ENCODE measurements at regions of chr11 and their contacts with region 1.

Region 1: DNA sequence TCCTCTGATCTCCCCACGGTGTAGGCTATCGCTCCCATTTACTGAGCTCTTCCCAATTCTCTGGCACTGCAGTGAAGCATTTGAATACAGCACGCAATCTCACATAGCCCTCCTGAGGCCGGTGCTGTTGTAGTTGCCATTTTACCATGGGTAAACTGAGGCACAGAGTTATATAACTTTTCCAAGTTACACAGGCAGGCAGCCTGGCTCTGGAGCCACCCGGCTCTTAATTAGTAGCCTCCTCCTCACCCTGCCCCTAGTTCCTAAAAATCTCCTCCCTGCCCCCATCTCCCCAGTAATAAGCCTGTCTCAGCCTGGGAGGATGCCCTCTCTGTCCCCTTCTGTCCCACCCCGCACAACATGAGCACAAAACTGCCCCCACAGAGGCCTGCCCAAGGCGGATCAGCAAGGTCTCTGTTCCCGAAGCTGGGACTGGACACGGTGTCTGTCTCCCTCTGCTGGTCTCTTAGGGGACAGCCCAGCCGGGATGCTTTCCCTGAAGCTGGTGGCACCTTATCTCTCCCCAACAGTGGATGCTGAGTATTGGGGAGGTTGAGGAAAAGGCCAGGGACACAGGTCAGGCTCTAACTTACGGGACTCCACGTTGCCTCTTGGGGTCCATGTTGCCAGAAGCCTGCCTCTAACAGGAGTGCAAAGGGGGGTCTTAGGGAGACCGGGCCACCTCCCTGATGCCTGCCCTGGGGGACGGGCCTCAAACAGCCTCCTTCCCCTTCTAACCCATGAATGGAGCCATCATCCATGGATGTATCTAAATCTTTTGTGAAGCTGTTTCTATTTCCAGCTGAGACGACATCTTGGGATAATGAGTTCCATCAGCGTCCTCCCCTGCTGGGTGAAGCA is 9.1 kb upstream of the CLCF1 start:
- DNase-seq: peak; percentile 81
- ATAC-seq: peak; percentile 76 to 91 (median 88)
- H3K4me3 ChIP-seq: no peak overlapping the region
- H3K27ac ChIP-seq: no peak overlapping the region
- H3K4me1 ChIP-seq: peaks cover 0 to 44% (median 4%) of the 10 kb centered on the region in 9 donors
- H3K27me3 ChIP-seq: peaks cover 0 to 7% (median 0%) of the 10 kb centered on the region in 7 donors
- CTCF ChIP-seq: peak; percentile 92 to 99 (median 96)

Region 2: GRCh38 chr11:66950113-66950535 is 432.4 kb before region 1 on chr11:
- intact Hi-C with region 1: no loop called
- DNase-seq: no peak
- ATAC-seq: peak in 2 of 8 donors; percentile 16 to 80
- H3K4me3 ChIP-seq: no peak overlapping the region
- H3K27ac ChIP-seq: no peak overlapping the region
- H3K4me1 ChIP-seq: peaks cover 0 to 5% (median 0%) of the 10 kb centered on the region in 9 donors
- H3K27me3 ChIP-seq: no peaks in the 10 kb centered on the region
- CTCF ChIP-seq: no peak

Region 3: DNA sequence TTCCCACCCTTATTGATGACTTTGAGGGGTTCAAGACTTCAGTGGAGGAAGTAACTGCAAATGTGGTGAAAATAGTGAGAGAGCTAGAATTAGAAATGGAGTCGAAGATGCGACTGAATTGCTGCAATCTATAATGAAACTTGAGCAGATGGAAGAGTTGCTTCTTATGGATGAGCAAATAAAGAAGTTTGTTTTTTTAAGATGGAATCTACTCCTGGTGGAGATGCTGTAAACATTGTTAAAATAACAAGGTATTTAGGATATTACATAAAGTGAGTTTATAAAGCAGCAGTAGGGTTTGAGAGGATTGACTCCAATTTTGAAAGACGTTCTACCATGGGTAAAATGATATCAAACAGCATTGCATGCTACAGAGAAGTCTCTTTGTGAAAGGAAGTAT is 180.5 kb before region 1 on chr11:
- intact Hi-C with region 1: no loop called
- DNase-seq: no peak
- ATAC-seq: no peak
- H3K4me3 ChIP-seq: no peak overlapping the region
- H3K27ac ChIP-seq: no peak overlapping the region
- H3K4me1 ChIP-seq: no peaks in the 10 kb centered on the region
- H3K27me3 ChIP-seq: no peaks in the 10 kb centered on the region
- CTCF ChIP-seq: no peak

Region 4: GRCh38 chr11:67317205-67317887 is 65.2 kb before region 1 on chr11:
- intact Hi-C with region 1: loop called in 1 of 10 experiments (anchors 10 kb)
- DNase-seq: peak; percentile 96 to 97
- ATAC-seq: peak; percentile 93 to 97 (median 96)
- H3K4me3 ChIP-seq: peak overlapping the region; percentile 68 to 94 (median 78)
- H3K27ac ChIP-seq: peak overlapping the region; percentile 84 to 97 (median 94)
- H3K4me1 ChIP-seq: peaks cover 4 to 30% (median 19%) of the 10 kb centered on the region in 9 donors
- H3K27me3 ChIP-seq: no peaks in the 10 kb centered on the region
- CTCF ChIP-seq: peak; percentile 92 to 99 (median 97)

Region 5: GRCh38 chr11:67345920-67346799 is 36.3 kb before region 1 on chr11:
- intact Hi-C with region 1: loop called in 5 of 10 experiments (anchors 1 to 5 kb)
- DNase-seq: no peak
- ATAC-seq: no peak
- H3K4me3 ChIP-seq: no peak overlapping the region
- H3K27ac ChIP-seq: no peak overlapping the region
- H3K4me1 ChIP-seq: peaks cover 5 to 24% (median 10%) of the 10 kb centered on the region in 9 donors
- H3K27me3 ChIP-seq: no peaks in the 10 kb centered on the region
- CTCF ChIP-seq: peak in 7 of 9 donors; percentile 31 to 75 (median 39)

Region 6: DNA sequence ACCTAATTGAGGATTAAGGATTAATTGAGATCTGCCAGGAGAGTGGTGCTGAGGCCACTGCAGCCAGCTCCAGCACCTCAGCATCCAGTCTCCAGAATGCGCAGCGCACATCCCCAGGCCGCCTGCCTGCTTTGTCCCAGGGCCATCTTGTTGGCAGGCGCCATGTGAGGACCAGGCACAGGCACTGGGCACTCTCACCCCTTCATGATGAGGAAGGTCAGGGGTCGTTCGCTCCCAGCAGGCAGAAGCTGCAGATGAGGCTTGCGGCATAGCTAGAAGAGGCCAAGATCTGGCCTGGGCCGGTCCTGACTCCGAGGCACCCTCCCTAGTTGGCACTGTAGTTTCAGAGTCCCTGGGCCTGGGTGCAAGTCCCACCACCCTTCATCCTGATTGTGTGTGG is 134.3 kb after region 1 on chr11:
- intact Hi-C with region 1: no loop called
- DNase-seq: no peak
- ATAC-seq: no peak
- H3K4me3 ChIP-seq: no peak overlapping the region
- H3K27ac ChIP-seq: no peak overlapping the region
- H3K4me1 ChIP-seq: no peaks in the 10 kb centered on the region
- H3K27me3 ChIP-seq: peaks cover 0 to 15% (median 0%) of the 10 kb centered on the region in 7 donors
- CTCF ChIP-seq: no peak

Region 7: GRCh38 chr11:67606492-67607201 is 224.1 kb after region 1 on chr11 and contains the start of gene NDUFV1:
- intact Hi-C with region 1: no loop called
- DNase-seq: peak; percentile 97 to 98
- ATAC-seq: peak; percentile 97 to 100 (median 99)
- H3K4me3 ChIP-seq: peak within 1 kb of the TSS; percentile 85 to 100 (median 92)
- H3K27ac ChIP-seq: peak within 1 kb of the TSS; percentile 66 to 97 (median 92)
- H3K4me1 ChIP-seq: peaks cover 12 to 27% (median 20%) of the 10 kb centered on the region in 9 donors
- H3K27me3 ChIP-seq: peaks cover 0 to 2% (median 0%) of the 10 kb centered on the region in 7 donors
- CTCF ChIP-seq: peak; percentile 34 to 84 (median 70)
- total RNA-seq, gene NDUFV1: 406 to 712 (median 638) TPM

Measured in heart right ventricle (tissue), 16 donors.